Gastrocnemius medialis (tissue), 4 donors: ENCODE measurements at regions of chr10 and their contacts with region 1.

Region 1: DNA sequence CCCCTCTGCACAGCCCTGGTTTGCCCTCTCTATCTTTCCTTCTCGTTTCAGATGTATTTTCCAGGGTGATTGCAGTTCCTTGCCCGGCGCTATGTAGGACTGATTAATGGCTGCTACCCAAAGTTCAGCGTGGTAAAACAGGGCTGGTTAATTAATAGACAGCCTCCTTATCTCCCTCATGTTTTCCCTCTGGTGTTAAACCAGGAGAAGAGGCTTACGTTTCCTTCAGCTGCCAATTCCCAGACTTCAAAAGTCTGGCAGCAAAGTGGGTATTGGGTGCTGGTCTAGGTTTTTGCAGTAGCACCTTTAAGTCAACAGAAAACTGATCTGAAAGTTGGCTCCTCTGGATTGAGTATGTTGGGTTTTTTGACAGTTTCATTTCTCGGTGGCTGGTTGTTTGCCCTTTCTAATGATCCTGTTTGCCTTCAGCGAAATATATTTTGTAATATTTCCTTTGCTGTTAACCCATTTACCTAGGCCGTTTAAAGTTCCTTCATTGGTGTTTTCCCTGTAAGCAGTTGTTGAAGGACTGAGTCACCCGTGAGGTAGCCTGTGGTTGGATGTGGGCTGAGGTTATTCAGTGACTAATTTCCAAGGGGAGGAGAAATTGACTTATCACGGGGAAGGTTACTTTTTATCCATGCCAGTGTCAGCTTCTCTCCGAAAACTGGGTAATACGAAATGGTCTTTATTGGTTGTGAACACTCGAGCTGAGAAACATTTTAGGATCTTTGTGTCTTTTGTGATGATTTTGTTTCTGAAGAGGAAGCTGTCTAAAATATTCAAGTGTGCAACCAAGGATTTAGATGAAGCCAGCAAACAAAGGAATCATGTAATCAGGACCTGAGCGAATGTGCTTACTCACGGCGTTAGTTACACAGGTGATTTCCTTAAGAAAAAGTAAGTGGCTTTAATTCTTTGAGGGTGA is 257.2 kb downstream of the KIAA1217 start:
- DNase-seq: peak; percentile 45 to 53
- ATAC-seq: peak; percentile 53 to 70
- H3K4me3 ChIP-seq: peak overlapping the region; percentile 7 to 53 (median 34)
- H3K27ac ChIP-seq: peak overlapping the region; percentile 69 to 87 (median 83)
- H3K4me1 ChIP-seq: peaks cover 88% of the 10 kb centered on the region in 2 donors
- H3K27me3 ChIP-seq: no peaks in the 10 kb centered on the region
- CTCF ChIP-seq: no peak
- POLR2A ChIP-seq: peak; percentile 20 to 75

Region 2: DNA sequence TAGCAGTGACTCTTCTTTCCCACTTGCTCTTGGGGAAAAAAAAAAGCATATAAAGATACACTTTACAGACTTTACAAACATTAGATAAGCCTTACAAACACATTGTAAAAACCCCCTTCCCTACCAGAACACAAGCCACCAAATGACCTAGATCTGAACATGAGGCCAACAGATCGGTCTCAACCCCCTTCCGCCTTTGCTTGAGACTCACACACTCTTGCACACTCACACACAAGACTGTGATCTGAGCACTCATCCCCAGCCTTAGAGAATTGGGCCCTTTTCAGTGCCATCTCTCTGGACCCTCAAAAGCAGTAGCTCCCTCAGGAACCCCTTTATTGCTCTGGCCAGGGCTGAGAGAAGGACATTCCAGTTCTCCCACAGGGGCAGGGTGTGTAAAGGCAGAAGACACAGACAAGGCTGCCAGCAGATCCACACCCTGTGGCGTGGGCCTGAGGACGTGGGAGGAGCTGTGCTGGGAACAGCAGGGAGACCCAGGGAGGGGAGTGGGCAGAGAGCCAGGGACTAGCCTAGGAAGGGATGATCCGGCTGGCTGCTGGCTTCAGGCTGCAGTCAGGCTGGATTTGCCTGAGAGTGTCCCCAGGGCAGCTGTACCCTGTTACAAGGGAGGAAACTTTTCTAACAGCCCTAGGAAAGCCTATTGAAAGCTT is 50.6 kb before region 1 on chr10:
- in situ Hi-C with region 1: no loop called
- intact Hi-C with region 1: loop called (anchors 2 kb)
- DNase-seq: peak; percentile 90 to 97
- ATAC-seq: peak; percentile 76 to 77
- H3K4me3 ChIP-seq: peak overlapping the region in 2 of 4 donors; percentile 2 to 23
- H3K27ac ChIP-seq: peak overlapping the region; percentile 84 to 97 (median 92)
- H3K4me1 ChIP-seq: peaks cover 49 to 54% of the 10 kb centered on the region in 2 donors
- H3K27me3 ChIP-seq: no peaks in the 10 kb centered on the region
- CTCF ChIP-seq: no peak
- POLR2A ChIP-seq: peak in 1 of 2 donors; percentile 56